HepG2 (cell line): ENCODE measurements at regions of chr1 and their contacts with region 1.

Region 1: GRCh38 chr1:23809751-23810171 is 9.2 kb upstream of the GALE start:
- DNase-seq: peak; percentile 78
- ATAC-seq: peak; percentile 89
- H3K4me3 ChIP-seq: no peak overlapping the region
- H3K27ac ChIP-seq: peak overlapping the region; percentile 59
- H3K4me1 ChIP-seq: peaks cover 36% of the 10 kb centered on the region
- H3K27me3 ChIP-seq: no peaks in the 10 kb centered on the region
- CTCF ChIP-seq: peak; percentile 94
- EP300 ChIP-seq: peak in 1 of 2 experiments; percentile 25; a peak in 2 of 4 replicates
- POLR2A ChIP-seq: no peak
- RAD21 ChIP-seq: peak; percentile 93

Region 2: DNA sequence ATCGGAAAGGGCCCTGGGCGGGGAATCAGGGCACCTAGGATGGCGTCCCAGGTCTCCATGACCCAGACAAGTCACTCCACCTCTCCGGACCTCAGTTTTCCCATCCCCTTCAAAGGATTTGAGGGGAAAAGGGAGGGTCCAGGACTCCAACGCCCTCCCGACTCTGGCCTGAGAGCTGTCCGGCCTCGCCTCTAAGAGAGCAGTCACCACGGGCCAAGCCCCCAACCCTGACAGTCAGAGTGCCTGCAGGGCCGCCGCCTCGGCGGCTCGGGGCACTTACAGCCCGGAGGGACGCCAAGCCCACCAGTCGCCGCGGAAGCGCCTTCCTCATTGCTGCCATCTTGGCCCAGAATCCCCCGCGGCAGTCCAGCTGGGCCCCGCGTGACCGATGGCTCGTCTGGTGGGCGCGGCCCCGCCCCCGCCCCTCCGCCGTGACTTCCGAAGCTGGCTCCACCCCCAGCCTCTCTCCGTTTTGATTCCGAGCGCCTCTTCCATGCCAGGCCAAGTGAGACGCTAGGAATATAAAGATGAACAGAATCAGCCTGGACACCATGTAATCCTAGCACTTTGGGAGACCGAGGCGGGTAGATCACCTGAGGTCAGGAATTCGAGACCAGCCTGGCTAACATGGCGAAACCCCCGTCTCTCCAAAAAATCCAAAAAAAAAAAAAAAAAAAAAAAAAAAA is 15.5 kb after region 1 on chr1 and contains the start of gene HMGCL:
- CTCF ChIA-PET with region 1: no interaction called
- POLR2A ChIA-PET with region 1: interaction called, 71 read pairs
- in situ Hi-C with region 1: no loop called
- intact Hi-C with region 1: no loop called
- DNase-seq: peak; percentile 80
- ATAC-seq: peak; percentile 94
- H3K4me3 ChIP-seq: peak within 1 kb of the TSS; percentile 90 to 100 (median 99)
- H3K27ac ChIP-seq: peak within 1 kb of the TSS; percentile 99
- H3K4me1 ChIP-seq: peaks cover 24% of the 10 kb centered on the region
- H3K27me3 ChIP-seq: no peaks in the 10 kb centered on the region; a peak in 1 of 5 replicates
- CTCF ChIP-seq: peak; percentile 9; the same call in 1 of the 2 replicates
- EP300 ChIP-seq: 0 out of 4 replicates have a peak, but pooled peaks of 1 of the 2 experiments have one; percentile 35
- POLR2A ChIP-seq: peak; percentile 86 to 95
- RAD21 ChIP-seq: no peak
- total RNA-seq, gene HMGCL: 21.3 and 30.0 TPM in 2 replicates

Region 3: GRCh38 chr1:23854568-23854967 is 44.8 kb after region 1 on chr1:
- CTCF ChIA-PET with region 1: interaction called, 10 read pairs
- POLR2A ChIA-PET with region 1: no interaction called
- in situ Hi-C with region 1: no loop called
- intact Hi-C with region 1: loop called (anchors 1 kb)
- DNase-seq: peak; percentile 20
- ATAC-seq: peak; percentile 52; the same call in 1 of the 3 replicates
- H3K4me3 ChIP-seq: no peak overlapping the region
- H3K27ac ChIP-seq: no peak overlapping the region
- H3K4me1 ChIP-seq: no peaks in the 10 kb centered on the region
- H3K27me3 ChIP-seq: no peaks in the 10 kb centered on the region
- CTCF ChIP-seq: peak; percentile 66
- EP300 ChIP-seq: no peak
- POLR2A ChIP-seq: no peak
- RAD21 ChIP-seq: 0 out of 2 replicates have a peak, but pooled peaks have one; percentile 32

Region 4: GRCh38 chr1:23867953-23868556 is 58.3 kb after region 1 on chr1 and contains the start of gene FUCA1:
- CTCF ChIA-PET with region 1: interaction called, 15 read pairs
- POLR2A ChIA-PET with region 1: interaction called, 6 read pairs
- in situ Hi-C with region 1: loop called (anchors 5 kb)
- intact Hi-C with region 1: loop called (anchors 5 kb)
- DNase-seq: peak; percentile 89
- ATAC-seq: peak; percentile 96
- H3K4me3 ChIP-seq: peak within 1 kb of the TSS; percentile 67 to 81 (median 81)
- H3K27ac ChIP-seq: peak within 1 kb of the TSS; percentile 37
- H3K4me1 ChIP-seq: peaks cover 33% of the 10 kb centered on the region
- H3K27me3 ChIP-seq: no peaks in the 10 kb centered on the region; a peak in 2 of 5 replicates
- CTCF ChIP-seq: peak; percentile 93
- EP300 ChIP-seq: no peak
- POLR2A ChIP-seq: peak in 1 of 2 experiments; percentile 91; a peak in 2 of 4 replicates
- RAD21 ChIP-seq: peak; percentile 68
- total RNA-seq, gene FUCA1: 14.9 and 33.6 TPM in 2 replicates

Region 5: DNA sequence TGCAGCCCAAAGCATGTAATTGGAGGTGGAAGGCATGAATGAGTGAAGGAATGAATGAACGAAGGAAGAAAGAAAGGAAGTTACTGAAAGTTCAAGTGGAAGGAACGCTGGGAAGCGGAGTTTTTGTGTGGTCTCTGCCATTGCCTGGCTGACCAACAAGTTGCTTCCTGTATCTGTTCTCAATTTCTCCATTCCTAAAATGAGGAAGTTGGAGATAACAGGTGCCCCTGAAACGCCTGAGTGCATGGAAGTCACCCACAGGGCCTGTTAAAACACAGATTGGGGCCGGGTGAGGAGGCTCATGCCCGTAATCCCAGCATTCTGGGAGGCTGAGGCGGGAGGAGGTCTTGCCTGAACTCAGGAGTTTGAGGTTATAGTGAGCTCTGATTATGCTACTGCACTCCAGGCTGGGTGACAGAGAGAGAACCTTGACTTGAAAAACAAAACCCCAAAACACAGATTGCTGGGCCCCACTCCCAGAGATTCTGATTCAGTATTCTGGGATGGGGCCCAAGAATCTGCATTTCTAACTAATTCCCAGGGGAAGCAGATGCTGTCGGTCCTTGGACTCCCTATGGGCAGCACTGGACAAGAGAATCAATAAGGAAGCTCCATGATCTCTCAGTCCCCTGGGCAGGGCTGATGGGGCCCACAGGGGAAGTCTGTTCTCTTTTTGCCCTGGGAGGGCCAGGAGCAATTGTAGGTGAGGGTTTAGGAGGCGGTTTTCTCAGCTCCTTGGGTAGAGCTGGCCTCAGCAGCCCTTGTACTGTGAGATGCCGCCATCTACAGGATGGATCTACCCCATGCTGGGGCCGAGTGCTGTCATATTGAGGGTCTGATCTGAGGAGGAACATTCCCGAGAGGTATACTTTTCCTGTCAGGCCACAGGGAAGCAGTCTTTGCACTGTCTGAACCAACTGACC is 106.7 kb after region 1 on chr1:
- CTCF ChIA-PET with region 1: interaction called, 14 read pairs
- POLR2A ChIA-PET with region 1: interaction called, 7 read pairs
- in situ Hi-C with region 1: loop called (anchors 5 kb)
- intact Hi-C with region 1: loop called (anchors 2 kb)
- DNase-seq: peak; percentile 60
- ATAC-seq: peak; percentile 95
- H3K4me3 ChIP-seq: no peak overlapping the region
- H3K27ac ChIP-seq: no peak overlapping the region
- H3K4me1 ChIP-seq: peaks cover 39% of the 10 kb centered on the region
- H3K27me3 ChIP-seq: peaks cover 2 to 9% of the 10 kb centered on the region in 2 experiments; a peak in 2 of 5 replicates
- CTCF ChIP-seq: peak; percentile 94
- EP300 ChIP-seq: no peak
- POLR2A ChIP-seq: no peak
- RAD21 ChIP-seq: peak; percentile 84

Region 6: DNA sequence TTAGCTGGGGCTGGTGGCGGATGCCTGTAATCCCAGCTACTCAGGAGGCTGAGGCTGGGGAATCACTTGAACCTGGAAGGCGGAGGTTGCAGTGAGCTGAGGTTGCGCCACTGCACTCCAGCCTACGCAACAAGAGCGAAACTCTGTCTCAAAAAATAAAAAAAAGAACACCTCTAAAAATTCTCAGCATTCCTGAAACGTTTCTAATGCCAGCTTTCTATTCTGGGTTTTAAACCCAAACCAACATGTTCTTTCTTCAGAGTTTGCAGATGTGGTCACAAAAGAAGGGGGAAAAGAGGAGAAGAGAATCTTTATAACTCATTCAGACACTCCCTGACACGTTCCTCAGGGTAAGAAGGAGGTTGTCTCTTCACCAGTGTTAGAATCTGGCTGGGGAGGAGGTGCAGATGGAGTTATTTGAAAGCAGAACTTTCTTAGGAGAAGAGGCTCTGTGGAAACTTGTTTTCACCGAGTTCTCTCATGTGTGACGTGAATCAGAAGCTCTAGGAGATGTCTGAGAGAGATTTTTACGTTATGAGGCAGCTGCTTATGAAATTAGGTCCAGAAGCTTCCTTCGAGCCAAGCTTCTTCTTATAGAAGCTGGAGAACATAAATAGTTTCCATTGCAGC is 121.2 kb after region 1 on chr1:
- CTCF ChIA-PET with region 1: no interaction called
- POLR2A ChIA-PET with region 1: no interaction called
- in situ Hi-C with region 1: no loop called
- intact Hi-C with region 1: no loop called
- DNase-seq: no peak
- ATAC-seq: no peak
- H3K4me3 ChIP-seq: no peak overlapping the region
- H3K27ac ChIP-seq: no peak overlapping the region
- H3K4me1 ChIP-seq: no peaks in the 10 kb centered on the region
- H3K27me3 ChIP-seq: peaks cover 0 to 13% of the 10 kb centered on the region in 2 experiments; a peak in 2 of 5 replicates
- CTCF ChIP-seq: no peak
- EP300 ChIP-seq: no peak
- POLR2A ChIP-seq: no peak
- RAD21 ChIP-seq: no peak